ENCODE measurements at regions of chr12 and their contacts with region 1.

Region 1: DNA sequence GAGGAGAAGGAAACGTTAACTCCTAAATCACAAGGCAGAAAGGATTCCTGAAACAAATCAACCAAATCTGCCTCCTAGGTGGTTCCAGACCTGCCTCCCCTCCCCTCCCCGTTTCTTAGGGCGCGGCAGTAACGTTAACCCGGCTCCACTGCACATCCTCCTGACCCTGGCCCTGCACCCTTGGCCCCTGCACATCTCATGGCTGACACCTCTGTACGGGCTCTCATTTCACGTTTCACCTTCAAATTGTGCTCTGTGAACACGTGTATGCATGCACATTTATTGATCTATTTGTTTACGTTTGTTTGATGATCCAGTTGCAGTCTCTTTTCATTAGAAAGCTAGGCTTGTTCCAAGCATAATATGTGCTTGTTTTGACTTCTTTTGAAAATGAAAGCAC is 358.1 kb downstream of the ADGRD1 start:
- DNase-seq: no peak
- H3K4me3 ChIP-seq: no peak overlapping the region
- H3K27ac ChIP-seq: no peak overlapping the region
- H3K4me1 ChIP-seq: no peaks in the 10 kb centered on the region
- H3K27me3 ChIP-seq: no peaks in the 10 kb centered on the region
- CTCF ChIP-seq: no peak
- POLR2A ChIP-seq: no peak

Region 2: DNA sequence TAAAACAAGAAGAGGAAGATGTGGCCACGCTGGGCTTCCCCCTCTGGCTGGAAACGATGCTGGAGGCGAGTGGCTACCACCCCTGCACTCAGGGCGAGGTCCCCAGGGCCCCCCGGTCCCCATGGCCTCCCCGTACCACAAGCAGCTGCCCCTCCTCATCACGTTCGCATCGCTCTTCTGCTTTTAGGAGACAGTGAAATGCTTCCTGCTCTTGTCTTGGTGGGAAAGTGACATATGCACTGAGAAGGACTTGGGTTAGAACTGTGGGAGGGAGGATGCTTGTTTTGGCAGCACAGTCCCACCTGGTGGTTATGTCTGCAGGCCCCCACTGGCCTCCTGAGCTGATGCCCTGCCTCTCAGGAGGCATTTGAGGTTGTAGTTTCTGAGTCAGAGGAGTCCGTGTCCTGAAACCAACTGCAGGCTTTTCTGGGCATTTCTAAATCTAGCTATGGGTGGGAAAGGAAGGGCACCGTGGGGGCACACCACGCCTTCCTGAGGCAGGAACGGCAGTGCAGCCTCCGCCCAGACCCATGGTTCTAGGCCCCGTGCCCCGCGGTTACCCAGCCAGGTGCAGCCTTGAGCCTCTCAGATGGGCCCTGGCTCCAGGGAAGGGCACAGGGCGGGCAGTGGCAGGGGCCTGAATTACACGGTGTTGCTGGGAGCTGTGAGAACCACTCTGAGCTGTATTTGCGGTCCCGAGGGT is 218.7 kb before region 1 on chr12:
- intact Hi-C with region 1: no loop called
- DNase-seq: no peak
- H3K4me3 ChIP-seq: no peak overlapping the region
- H3K27ac ChIP-seq: no peak overlapping the region
- H3K4me1 ChIP-seq: no peaks in the 10 kb centered on the region
- H3K27me3 ChIP-seq: no peaks in the 10 kb centered on the region
- CTCF ChIP-seq: no peak
- POLR2A ChIP-seq: no peak

Region 3: DNA sequence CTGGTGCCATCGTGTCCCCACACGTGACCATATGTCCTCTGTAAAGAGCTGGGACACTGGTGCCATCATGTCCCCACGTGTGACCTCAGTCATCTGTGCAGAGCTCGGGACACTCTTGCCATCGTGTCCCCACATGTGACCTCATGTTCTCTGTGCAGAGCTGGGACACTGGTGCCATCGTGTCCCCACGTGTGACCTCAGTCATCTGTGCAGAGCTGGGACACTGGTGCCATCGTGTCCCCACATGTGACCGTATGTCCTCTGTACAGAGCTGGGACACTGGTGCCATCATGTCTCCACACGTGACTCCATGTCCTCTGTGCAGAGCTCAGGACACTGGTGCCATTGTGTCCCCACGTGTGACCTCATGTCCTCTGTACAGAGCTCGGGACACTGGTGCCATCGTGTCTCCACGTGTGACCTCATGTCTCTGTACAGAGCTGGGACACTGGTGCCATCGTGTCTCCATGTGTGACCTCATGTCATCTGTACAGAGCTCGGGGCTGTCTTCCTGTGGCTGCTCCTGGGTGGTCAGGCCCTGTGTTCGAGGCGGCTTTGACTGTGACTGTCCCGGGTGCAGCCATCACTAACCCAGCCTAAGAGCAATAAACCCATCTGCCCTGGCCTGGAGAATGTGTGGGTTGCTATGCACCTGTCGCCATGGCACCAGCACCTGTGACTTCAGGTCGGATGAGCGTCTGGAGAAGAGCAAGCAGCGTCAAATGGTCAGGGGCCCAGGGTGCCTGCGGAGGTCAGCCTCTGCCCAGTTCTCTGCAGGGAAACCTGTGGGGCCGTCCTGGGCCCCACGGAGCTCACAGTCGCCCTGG is 23.6 kb before region 1 on chr12:
- intact Hi-C with region 1: no loop called
- DNase-seq: no peak
- H3K4me3 ChIP-seq: no peak overlapping the region
- H3K27ac ChIP-seq: no peak overlapping the region
- H3K4me1 ChIP-seq: no peaks in the 10 kb centered on the region
- H3K27me3 ChIP-seq: no peaks in the 10 kb centered on the region
- CTCF ChIP-seq: no peak
- POLR2A ChIP-seq: no peak

Region 4: DNA sequence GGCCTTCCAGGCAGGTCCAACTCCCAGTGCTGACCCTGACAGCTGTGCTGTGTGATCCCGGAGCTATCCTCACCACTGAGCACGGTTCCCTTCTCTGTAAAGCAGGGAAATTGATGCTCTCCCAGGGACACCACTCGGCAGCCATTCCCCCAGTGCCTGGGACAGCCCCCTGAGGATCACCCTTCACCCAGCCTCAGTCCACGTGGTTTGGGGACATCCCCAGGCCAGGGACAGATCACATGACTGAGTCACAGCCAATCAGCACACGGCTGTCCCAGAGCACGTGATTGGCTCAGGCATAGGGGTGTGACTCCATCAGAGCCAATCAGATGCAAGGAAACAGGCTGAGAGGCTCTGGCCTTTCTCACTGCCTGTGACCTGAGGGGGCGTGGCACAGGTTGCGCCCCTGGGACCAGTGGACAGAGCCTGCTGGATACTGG is 330.4 kb after region 1 on chr12:
- intact Hi-C with region 1: loop called (anchors 5 kb)
- DNase-seq: no peak
- H3K4me3 ChIP-seq: no peak overlapping the region
- H3K27ac ChIP-seq: no peak overlapping the region
- H3K4me1 ChIP-seq: no peaks in the 10 kb centered on the region
- H3K27me3 ChIP-seq: peaks cover 6% of the 10 kb centered on the region
- CTCF ChIP-seq: no peak
- POLR2A ChIP-seq: no peak